WTC11 (cell line): ENCODE measurements at regions of chr1 and their contacts with region 1.

Region 1: GRCh38 chr1:159869173-159869572 is 6.7 kb upstream of the VSIG8 start:
- DNase-seq: no peak
- ATAC-seq: no peak
- H3K4me3 Mint-ChIP-seq: no peak overlapping the region
- H3K27ac Mint-ChIP-seq: no peak overlapping the region
- H3K4me1 Mint-ChIP-seq: peaks cover 4% of the 10 kb centered on the region
- H3K27me3 Mint-ChIP-seq: no peaks in the 10 kb centered on the region; the same call in 1 of the 2 replicates
- CTCF ChIP-seq: no peak

Region 2: GRCh38 chr1:159854693-159855192 is 14.4 kb before region 1 on chr1:
- CTCF ChIA-PET with region 1: interaction called, 11 read pairs
- POLR2A ChIA-PET with region 1: no interaction called
- DNase-seq: peak; percentile 68
- ATAC-seq: peak; percentile 83
- H3K4me3 Mint-ChIP-seq: peak overlapping the region; percentile 87
- H3K27ac Mint-ChIP-seq: no peak overlapping the region
- H3K4me1 Mint-ChIP-seq: peaks cover 6% of the 10 kb centered on the region
- H3K27me3 Mint-ChIP-seq: peaks cover 46% of the 10 kb centered on the region
- CTCF ChIP-seq: no peak

Region 3: DNA sequence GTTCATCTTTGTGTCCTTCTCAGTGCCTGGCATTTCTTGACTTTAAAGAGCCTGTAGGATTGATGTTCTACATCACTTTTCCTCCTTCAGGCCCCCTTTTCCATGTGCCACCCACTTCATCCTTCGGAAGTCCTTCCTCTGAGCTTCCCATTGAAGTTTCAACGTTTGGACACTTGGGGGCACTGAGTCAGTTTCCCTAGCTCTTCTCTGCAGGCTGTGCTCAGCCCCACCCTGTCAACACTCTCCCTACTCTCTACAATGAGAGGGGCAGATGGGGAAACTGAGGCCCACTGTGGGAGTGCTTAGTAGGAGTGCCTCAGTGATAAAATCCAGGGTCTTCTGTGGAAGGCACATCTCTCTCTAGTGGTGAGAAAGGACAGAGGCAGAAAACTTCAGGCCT is 188.9 kb after region 1 on chr1:
- CTCF ChIA-PET with region 1: no interaction called
- POLR2A ChIA-PET with region 1: no interaction called
- DNase-seq: no peak
- ATAC-seq: peak; percentile 53
- H3K4me3 Mint-ChIP-seq: no peak overlapping the region
- H3K27ac Mint-ChIP-seq: no peak overlapping the region
- H3K4me1 Mint-ChIP-seq: peaks cover 18% of the 10 kb centered on the region
- H3K27me3 Mint-ChIP-seq: peaks cover 7% of the 10 kb centered on the region
- CTCF ChIP-seq: no peak